ENCODE measurements at regions of chr1 and their contacts with region 1.

Region 1: DNA sequence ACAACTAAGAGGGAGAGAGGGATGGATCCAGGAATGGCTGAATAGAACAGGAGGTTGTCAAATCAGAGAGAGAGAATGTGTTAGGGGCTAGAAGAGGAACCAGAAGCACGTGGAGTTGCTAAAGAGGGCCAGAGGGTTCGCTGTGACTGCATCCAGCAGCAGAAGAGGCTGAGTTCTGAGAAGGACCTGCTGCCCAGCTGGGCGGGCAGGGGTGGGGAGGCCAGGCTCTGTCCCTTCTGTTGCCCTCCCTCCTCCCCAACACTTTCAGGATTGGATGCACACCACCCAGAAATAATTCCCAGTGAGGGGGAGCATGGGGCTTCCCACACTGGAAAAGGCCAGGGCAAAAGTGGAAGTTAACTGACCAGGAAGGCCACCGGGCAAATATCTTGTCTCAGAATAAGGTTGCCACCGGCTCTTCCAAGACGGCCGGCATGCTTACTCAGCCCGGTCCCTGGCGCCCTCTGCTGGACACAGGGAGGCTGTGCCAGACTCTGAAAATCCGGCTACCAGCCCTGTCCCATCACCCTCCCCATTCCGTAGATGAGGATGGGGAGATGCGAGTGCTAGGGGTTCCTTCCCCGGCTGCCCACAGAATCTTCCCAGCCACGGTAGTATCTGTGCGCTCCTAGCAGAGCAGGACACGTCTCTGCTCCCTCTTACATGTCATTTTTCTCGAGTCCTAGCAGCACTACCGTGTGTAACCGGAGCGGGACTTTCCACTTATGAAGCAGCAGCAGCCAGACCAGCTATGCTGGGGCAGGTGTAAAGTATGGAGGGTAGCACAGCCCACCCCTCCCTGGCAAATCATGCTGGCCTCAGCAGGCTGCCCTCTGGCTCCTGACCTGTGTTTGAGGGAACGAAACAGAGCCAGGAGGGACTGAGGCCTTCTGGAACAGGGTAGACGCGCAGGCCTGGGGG is 46.8 kb upstream of the A3GALT2 start:
- DNase-seq: peak; percentile 93
- ATAC-seq: peak; percentile 71
- H3K4me3 Mint-ChIP-seq: no peak overlapping the region
- H3K27ac Mint-ChIP-seq: no peak overlapping the region
- H3K4me1 Mint-ChIP-seq: peaks cover 35% of the 10 kb centered on the region
- H3K27me3 Mint-ChIP-seq: peaks cover 20% of the 10 kb centered on the region
- CTCF ChIP-seq: peak; percentile 90

Region 2: DNA sequence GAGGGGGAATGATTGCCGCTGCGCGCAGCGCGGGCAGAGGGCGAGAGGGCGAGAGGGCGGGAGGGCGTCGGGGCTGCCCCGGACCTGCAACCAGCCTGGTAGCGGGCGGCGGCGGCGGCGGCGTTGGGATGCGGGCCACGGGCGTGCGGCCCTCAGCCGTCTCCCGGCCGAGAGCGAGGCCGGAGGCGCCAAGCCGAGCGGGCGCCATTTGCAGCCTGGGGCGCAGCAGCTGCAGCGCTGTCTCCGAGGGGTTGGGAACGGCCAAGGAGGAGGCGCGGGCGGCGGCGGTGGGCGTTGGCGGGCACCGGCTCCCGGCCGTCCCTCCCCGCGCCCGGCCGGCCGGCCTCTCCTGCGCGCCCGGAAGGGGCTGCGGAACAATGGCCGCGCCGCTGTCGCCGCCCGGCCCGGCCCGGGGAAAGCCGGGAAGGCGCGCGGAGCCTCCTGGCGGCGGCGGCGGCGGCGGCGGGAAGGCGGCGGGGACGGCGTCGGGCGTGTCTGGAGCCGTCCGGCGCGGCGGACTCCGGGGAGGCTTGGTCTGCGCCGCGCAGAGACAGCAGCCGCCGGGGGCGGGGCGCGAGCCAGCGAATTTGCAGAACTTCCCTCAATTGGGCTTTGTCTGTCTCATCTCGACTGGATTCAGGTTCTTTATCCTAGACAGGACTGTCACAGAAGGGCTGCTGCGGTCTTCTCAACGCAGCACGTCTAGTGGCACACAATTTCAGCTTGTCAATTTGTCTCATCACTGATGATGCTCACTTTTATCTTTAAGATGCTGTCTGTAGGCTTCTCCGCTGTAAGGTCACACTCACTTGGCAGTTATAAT is 867.1 kb before region 1 on chr1:
- CTCF ChIA-PET with region 1: no interaction called
- POLR2A ChIA-PET with region 1: interaction called, 13 read pairs
- DNase-seq: peak; percentile 75
- ATAC-seq: peak; percentile 89
- H3K4me3 Mint-ChIP-seq: peak overlapping the region; percentile 90
- H3K27ac Mint-ChIP-seq: peak overlapping the region; percentile 98
- H3K4me1 Mint-ChIP-seq: peaks cover 12% of the 10 kb centered on the region
- H3K27me3 Mint-ChIP-seq: no peaks in the 10 kb centered on the region
- CTCF ChIP-seq: no peak

Region 3: GRCh38 chr1:33342041-33342723 is 25.6 kb before region 1 on chr1:
- CTCF ChIA-PET with region 1: interaction called, 13 read pairs
- POLR2A ChIA-PET with region 1: no interaction called
- DNase-seq: peak; percentile 46
- ATAC-seq: peak; percentile 68
- H3K4me3 Mint-ChIP-seq: peak overlapping the region; percentile 39
- H3K27ac Mint-ChIP-seq: 0 out of 2 replicates have a peak overlapping the region, but pooled peaks have one; percentile 18
- H3K4me1 Mint-ChIP-seq: peaks cover 63% of the 10 kb centered on the region
- H3K27me3 Mint-ChIP-seq: peaks cover 81% of the 10 kb centered on the region
- CTCF ChIP-seq: no peak

Region 4: GRCh38 chr1:33352596-33352995 is 15.1 kb before region 1 on chr1:
- CTCF ChIA-PET with region 1: no interaction called
- POLR2A ChIA-PET with region 1: no interaction called
- DNase-seq: no peak
- ATAC-seq: no peak
- H3K4me3 Mint-ChIP-seq: no peak overlapping the region
- H3K27ac Mint-ChIP-seq: no peak overlapping the region
- H3K4me1 Mint-ChIP-seq: peaks cover 20% of the 10 kb centered on the region
- H3K27me3 Mint-ChIP-seq: peaks cover 85% of the 10 kb centered on the region
- CTCF ChIP-seq: no peak

Region 5: GRCh38 chr1:33396188-33397124 is 28.7 kb after region 1 on chr1:
- CTCF ChIA-PET with region 1: no interaction called
- POLR2A ChIA-PET with region 1: no interaction called
- DNase-seq: no peak
- ATAC-seq: no peak
- H3K4me3 Mint-ChIP-seq: no peak overlapping the region
- H3K27ac Mint-ChIP-seq: no peak overlapping the region
- H3K4me1 Mint-ChIP-seq: peaks cover 20% of the 10 kb centered on the region
- H3K27me3 Mint-ChIP-seq: peaks cover 2% of the 10 kb centered on the region; the same call in 1 of the 2 replicates
- CTCF ChIP-seq: no peak